ENCODE measurements at regions of chr1 and their contacts with region 1.

Region 1: DNA sequence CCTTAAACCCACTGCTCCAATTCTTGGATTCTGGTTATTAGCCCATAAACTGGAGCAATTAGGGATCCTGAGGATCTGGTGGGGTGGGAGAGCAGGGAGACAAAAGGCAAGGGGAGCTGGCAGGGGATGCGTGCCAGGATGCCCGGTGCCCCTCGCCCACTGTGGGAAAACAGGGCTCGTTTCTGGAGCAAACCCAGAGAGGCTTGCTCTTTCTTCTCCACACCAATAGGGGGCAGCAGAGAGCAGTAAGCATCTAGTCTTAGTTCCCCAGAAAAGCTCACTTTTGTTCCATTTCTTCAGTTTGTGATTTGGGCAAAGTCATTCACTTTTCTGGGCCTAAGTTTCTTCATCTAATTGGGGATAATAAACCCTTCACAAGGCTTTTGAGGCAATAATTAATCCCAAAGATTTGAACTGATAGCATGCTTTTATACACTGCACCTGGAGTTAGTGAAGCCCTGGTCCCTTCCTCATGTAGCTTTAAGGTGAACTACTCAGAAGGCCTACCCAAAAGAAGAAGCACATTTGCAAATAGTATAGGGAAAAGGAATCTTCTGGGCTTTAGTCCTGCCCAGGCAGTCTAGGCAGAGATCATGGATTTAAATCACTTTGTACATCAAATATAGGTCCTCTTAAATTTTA is 160.6 kb upstream of the USP24 start:
- DNase-seq: peak; percentile 16 to 32 (median 28)
- H3K4me3 ChIP-seq: no peak overlapping the region
- H3K4me3 Mint-ChIP-seq: no peak overlapping the region
- H3K27ac ChIP-seq: no peak overlapping the region
- H3K27ac Mint-ChIP-seq: no peak overlapping the region
- H3K4me1 ChIP-seq: no peaks in the 10 kb centered on the region
- H3K4me1 Mint-ChIP-seq: peaks cover 2% of the 10 kb centered on the region
- H3K27me3 ChIP-seq: no peaks in the 10 kb centered on the region
- H3K27me3 Mint-ChIP-seq: peaks cover 1 to 2% (median 2%) of the 10 kb centered on the region in 3 donors
- CTCF ChIP-seq: peak; percentile 92

Region 2: GRCh38 chr1:55337801-55338447 is 37.8 kb before region 1 on chr1:
- intact Hi-C with region 1: no loop called
- DNase-seq: no peak
- H3K4me3 ChIP-seq: no peak overlapping the region
- H3K4me3 Mint-ChIP-seq: no peak overlapping the region
- H3K27ac ChIP-seq: no peak overlapping the region
- H3K27ac Mint-ChIP-seq: no peak overlapping the region
- H3K4me1 ChIP-seq: no peaks in the 10 kb centered on the region
- H3K4me1 Mint-ChIP-seq: no peaks in the 10 kb centered on the region
- H3K27me3 ChIP-seq: no peaks in the 10 kb centered on the region
- H3K27me3 Mint-ChIP-seq: peaks cover 1 to 5% (median 2%) of the 10 kb centered on the region in 3 donors
- CTCF ChIP-seq: peak; percentile 32

Region 3: DNA sequence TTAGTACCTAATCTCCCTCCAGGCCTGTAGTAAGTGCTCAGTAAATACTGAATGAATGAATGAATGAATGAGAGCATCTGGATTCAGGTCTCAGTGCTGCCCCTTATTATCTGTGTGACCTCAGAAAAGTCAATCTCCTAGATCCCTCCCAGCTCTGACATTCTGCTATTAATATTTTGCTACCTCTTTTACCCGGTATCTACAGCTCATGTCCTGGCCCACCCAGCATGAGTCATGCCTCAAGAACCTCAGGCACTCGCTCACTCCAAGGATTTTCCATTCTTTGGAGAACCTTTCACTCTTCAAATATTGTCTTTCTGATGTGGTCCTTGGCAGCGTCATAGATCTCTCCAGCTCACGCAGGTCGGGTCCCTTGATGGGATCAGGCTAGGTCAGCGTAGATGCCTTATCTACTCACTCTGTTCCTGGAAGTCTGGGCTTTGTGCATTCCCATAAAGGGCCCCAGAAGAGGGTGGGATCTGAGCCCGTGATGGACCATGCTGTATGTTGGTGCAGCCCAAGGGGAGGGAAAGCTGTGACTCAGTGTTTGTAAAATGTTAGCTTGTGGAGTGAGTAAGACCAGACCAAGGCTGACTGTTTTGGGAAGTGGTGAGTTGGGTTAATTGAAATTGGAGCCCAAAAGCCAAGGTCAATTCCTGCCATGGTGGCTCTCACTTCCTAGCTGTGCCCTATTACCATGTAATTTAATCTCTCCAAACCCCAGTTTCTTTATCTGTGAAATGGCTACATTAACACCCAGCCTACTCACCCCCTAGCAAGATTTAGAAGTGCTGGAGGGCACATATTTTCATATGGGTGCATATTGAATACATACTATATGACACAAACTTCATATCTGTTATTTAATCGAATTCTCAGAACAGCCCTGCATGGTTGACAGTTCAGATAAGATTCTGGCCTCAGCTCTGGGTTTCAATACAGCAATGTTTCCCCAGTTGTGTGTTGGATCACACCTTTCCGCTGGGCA is 53.5 kb after region 1 on chr1:
- intact Hi-C with region 1: no loop called
- DNase-seq: no peak
- H3K4me3 ChIP-seq: no peak overlapping the region
- H3K4me3 Mint-ChIP-seq: no peak overlapping the region
- H3K27ac ChIP-seq: no peak overlapping the region
- H3K27ac Mint-ChIP-seq: no peak overlapping the region
- H3K4me1 ChIP-seq: no peaks in the 10 kb centered on the region
- H3K4me1 Mint-ChIP-seq: no peaks in the 10 kb centered on the region
- H3K27me3 ChIP-seq: no peaks in the 10 kb centered on the region
- H3K27me3 Mint-ChIP-seq: peaks cover 2 to 5% (median 3%) of the 10 kb centered on the region in 3 donors
- CTCF ChIP-seq: no peak

Region 4: DNA sequence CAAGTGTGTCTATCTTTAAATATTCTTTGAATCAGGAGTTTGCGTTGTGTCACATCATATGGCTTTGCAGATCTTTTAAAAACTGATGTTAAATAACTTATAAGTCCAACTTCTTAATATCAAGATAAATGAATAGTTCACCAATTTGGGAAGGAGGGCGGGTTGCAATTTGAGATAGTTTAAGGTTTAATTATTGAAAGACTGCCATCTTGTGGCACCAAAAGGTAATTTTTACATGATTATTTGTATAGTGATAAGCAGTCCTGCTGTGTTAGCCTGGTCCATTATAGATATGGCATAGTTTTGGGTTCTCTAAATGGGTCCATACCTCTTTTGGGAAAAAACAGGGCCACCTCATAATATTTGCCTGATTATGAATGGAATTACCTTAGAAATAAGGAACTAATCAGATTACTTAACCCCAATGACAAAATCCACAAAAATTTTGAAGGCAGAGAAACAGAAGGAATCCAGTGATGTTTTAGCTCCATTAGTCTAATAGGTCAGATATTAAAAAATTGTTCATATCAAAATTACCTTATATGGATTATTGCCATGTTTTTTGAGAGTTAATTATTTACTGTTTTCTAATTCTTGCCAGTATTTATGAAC is 1333.6 kb after region 1 on chr1:
- intact Hi-C with region 1: loop called in 1 of 2 experiments (anchors 10 kb)
- DNase-seq: peak in 2 of 3 donors; percentile 9 to 24
- H3K4me3 ChIP-seq: no peak overlapping the region
- H3K4me3 Mint-ChIP-seq: no peak overlapping the region
- H3K27ac ChIP-seq: no peak overlapping the region
- H3K27ac Mint-ChIP-seq: no peak overlapping the region
- H3K4me1 ChIP-seq: no peaks in the 10 kb centered on the region
- H3K4me1 Mint-ChIP-seq: no peaks in the 10 kb centered on the region
- H3K27me3 ChIP-seq: no peaks in the 10 kb centered on the region
- H3K27me3 Mint-ChIP-seq: peaks cover 2 to 7% (median 6%) of the 10 kb centered on the region in 3 donors
- CTCF ChIP-seq: peak; percentile 76